HepG2 (cell line): ENCODE measurements at regions of chr1 and their contacts with region 1.

Region 1: DNA sequence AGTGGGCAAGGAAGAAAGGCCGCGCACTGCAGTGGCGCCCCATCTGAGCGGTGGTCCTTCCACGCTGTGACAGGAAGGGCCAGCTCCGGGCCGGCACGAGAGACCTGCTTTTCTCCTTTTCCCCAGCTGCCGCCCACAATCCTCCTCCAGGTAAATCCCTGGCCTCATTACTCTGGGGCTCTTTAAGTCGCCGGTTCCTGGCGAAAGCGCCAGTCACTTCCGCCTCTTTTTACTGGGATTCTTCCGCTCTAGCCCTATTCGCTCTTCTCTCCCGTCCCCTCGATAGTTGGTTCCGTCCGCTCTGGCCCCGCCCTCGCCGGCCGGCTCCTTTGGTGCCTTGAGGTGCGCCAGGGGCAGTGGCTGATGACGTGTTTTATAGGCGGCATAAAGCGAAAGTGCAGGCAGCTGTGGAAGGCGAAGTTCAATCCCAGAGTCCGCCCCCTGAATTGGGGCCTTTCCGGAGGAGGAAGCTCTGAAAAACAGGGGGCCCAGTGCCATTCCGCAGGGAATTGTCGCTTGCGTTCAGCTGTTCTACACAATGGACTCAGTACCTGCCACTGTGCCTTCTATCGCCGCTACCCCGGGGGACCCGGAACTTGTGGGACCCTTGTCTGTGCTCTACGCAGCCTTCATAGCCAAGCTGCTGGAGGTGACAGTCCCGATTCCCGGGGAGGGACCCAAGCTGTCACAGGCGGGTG is 26.2 kb downstream of the MIA3 start:
- DNase-seq: peak; percentile 98
- ATAC-seq: peak; percentile 96
- H3K4me3 ChIP-seq: peak overlapping the region; percentile 73 to 92 (median 88)
- H3K27ac ChIP-seq: peak overlapping the region; percentile 93
- H3K4me1 ChIP-seq: peaks cover 18% of the 10 kb centered on the region
- H3K27me3 ChIP-seq: no peaks in the 10 kb centered on the region; a peak in 1 of 5 replicates
- CTCF ChIP-seq: no peak; the same call in 1 of the 2 replicates
- EP300 ChIP-seq: peak in 1 of 2 experiments; percentile 47; a peak in 2 of 4 replicates
- POLR2A ChIP-seq: peak; percentile 52 to 92
- RAD21 ChIP-seq: no peak

Region 2: DNA sequence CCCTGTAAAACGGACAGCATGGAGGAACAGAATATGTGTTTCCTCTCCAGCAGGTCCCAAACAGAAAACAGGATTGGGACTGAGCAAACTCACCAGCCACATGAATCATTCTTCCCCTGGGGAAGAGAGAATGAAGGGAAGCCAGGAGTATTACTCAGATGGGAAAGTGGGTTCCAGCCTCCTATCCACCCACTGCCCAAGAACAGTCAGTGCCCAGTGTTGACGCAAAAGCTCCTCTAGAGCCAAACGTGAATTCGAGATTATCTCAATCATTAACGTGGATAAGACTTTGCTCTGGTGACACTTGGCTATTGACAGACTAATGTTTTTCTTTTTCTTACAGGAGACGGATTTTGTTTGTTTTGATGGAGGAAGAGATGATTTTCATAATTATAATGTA is 16.9 kb before region 1 on chr1:
- CTCF ChIA-PET with region 1: no interaction called
- POLR2A ChIA-PET with region 1: no interaction called
- in situ Hi-C with region 1: no loop called
- intact Hi-C with region 1: no loop called
- DNase-seq: no peak
- ATAC-seq: no peak
- H3K4me3 ChIP-seq: no peak overlapping the region
- H3K27ac ChIP-seq: no peak overlapping the region
- H3K4me1 ChIP-seq: no peaks in the 10 kb centered on the region
- H3K27me3 ChIP-seq: no peaks in the 10 kb centered on the region; a peak in 1 of 5 replicates
- CTCF ChIP-seq: no peak
- EP300 ChIP-seq: no peak
- POLR2A ChIP-seq: no peak
- RAD21 ChIP-seq: no peak

Region 3: GRCh38 chr1:222691016-222691415 is 46.9 kb after region 1 on chr1:
- CTCF ChIA-PET with region 1: no interaction called
- POLR2A ChIA-PET with region 1: no interaction called
- in situ Hi-C with region 1: no loop called
- intact Hi-C with region 1: no loop called
- DNase-seq: no peak
- ATAC-seq: no peak
- H3K4me3 ChIP-seq: no peak overlapping the region
- H3K27ac ChIP-seq: no peak overlapping the region
- H3K4me1 ChIP-seq: no peaks in the 10 kb centered on the region
- H3K27me3 ChIP-seq: no peaks in the 10 kb centered on the region
- CTCF ChIP-seq: no peak
- EP300 ChIP-seq: no peak
- POLR2A ChIP-seq: no peak
- RAD21 ChIP-seq: no peak

Region 4: DNA sequence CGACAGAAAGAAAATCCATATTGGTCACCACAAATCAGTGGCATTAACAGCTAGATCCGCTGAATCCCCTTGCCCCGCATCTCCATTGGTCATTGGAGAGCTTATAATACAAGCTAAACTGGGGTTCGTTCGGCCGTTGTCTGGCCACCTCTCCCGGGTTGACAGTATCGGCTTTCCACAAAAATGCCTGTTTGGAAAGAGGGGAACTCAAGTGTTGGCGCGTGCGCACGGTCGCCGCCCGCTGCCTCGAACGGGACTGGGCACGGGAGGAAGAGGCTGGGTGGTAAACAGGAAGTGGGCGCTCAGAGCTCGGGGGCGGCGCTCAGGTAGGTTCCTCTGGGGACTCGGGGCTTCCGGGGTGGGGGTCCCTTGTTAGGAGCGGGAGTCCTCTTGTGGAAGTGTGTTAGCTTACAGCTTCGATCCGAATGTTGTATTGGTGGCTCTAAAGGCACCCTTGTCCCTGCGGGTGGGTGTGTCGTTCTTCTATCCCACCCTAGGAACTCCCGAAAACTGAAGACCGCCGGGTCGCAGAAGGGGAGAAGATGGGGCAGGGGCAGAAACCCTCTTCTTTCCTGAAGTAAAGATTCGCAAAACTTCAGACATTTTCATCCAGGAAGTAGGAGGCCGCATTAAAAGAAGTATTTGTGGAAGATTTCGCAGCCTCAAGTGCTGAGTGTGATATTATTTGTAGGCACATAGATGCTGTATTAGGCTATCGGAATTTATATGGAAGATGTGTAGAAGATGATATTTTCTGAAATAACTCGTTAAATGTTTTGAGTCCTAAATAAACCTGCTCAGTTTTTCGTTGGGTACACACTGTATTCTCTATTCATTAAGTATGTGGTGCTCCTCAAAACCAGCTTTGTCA is 69.2 kb after region 1 on chr1:
- CTCF ChIA-PET with region 1: no interaction called
- POLR2A ChIA-PET with region 1: interaction called, 20 read pairs
- in situ Hi-C with region 1: no loop called
- intact Hi-C with region 1: loop called (anchors 2 kb)
- DNase-seq: peak; percentile 95
- ATAC-seq: peak; percentile 90
- H3K4me3 ChIP-seq: peak overlapping the region; percentile 66 to 87 (median 75)
- H3K27ac ChIP-seq: peak overlapping the region; percentile 92
- H3K4me1 ChIP-seq: peaks cover 27% of the 10 kb centered on the region
- H3K27me3 ChIP-seq: no peaks in the 10 kb centered on the region; a peak in 2 of 5 replicates
- CTCF ChIP-seq: peak; percentile 54
- EP300 ChIP-seq: peak in 1 of 2 experiments; percentile 28; a peak in 1 of 4 replicates
- POLR2A ChIP-seq: peak; percentile 59 to 65; a peak in 3 of 4 replicates
- RAD21 ChIP-seq: no peak; the same call in 1 of the 2 replicates